ENCODE measurements at regions of chr2 and their contacts with region 1.

Region 1: DNA sequence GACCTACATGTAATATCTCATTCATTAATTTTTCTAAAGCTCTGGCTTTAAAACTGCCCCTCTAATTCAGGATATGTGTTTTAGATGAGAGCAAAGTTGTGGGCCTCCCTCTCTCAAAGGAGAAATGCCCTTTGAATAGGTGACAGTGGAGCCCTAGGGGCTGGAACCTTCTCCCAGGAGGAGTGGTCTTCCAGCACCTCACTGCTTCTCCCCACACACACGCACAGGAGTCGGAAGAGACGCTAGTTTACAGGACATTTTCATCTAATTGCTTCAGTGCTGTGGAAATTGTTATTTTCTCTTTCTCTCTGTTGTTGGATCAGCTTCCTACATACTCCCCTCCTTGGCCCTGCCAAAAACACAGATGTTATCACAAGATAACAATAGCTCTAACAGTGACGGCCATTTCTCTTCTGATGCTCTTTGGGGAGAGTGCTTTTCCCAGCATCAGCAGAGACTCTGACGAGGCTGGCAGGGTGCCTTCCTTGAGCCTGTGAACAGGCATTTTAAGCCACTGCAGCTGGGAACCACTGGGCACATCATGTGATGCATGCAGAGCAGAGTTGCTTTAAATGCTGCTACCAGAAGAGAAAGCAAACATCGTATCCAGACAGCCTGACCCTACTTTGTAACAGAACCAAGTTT is 209.4 kb upstream of the SP5 start:
- DNase-seq: peak; percentile 87 to 88
- ATAC-seq: peak; percentile 78
- H3K4me3 ChIP-seq: no peak overlapping the region
- H3K27ac ChIP-seq: peak overlapping the region in 1 of 2 donors; percentile 93
- H3K4me1 ChIP-seq: no peaks in the 10 kb centered on the region
- H3K27me3 ChIP-seq: no peaks in the 10 kb centered on the region

Region 2: GRCh38 chr2:169891593-169892298 is 614.0 kb before region 1 on chr2:
- intact Hi-C with region 1: no loop called
- DNase-seq: no peak
- ATAC-seq: no peak
- H3K4me3 ChIP-seq: no peak overlapping the region
- H3K27ac ChIP-seq: no peak overlapping the region
- H3K4me1 ChIP-seq: peaks cover 2 to 4% of the 10 kb centered on the region in 2 donors
- H3K27me3 ChIP-seq: no peaks in the 10 kb centered on the region

Region 3: DNA sequence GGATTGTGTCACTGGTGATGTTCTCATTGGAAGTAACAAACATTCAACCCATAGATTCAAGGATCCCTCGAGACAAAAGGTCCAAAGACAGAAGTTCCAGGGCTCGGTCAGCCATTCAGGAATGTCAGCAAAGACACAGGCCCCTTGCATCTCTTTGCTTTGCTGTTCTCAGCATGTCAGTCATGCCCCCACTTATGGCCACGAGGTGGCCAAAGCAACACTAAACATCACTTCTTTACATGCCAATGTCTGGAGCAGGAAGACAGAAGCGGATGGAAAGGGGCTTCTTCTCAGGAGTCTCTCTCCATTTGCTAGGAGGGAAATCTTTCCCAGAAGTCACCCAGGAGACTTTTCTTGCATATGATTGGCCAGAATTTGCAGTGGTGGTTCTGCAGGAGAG is 17.8 kb after region 1 on chr2:
- intact Hi-C with region 1: loop called in 1 of 2 experiments (anchors 1 kb)
- DNase-seq: no peak
- ATAC-seq: no peak
- H3K4me3 ChIP-seq: no peak overlapping the region
- H3K27ac ChIP-seq: no peak overlapping the region
- H3K4me1 ChIP-seq: peaks cover 3 to 12% of the 10 kb centered on the region in 2 donors
- H3K27me3 ChIP-seq: peaks cover 0 to 4% of the 10 kb centered on the region in 2 donors

Region 4: DNA sequence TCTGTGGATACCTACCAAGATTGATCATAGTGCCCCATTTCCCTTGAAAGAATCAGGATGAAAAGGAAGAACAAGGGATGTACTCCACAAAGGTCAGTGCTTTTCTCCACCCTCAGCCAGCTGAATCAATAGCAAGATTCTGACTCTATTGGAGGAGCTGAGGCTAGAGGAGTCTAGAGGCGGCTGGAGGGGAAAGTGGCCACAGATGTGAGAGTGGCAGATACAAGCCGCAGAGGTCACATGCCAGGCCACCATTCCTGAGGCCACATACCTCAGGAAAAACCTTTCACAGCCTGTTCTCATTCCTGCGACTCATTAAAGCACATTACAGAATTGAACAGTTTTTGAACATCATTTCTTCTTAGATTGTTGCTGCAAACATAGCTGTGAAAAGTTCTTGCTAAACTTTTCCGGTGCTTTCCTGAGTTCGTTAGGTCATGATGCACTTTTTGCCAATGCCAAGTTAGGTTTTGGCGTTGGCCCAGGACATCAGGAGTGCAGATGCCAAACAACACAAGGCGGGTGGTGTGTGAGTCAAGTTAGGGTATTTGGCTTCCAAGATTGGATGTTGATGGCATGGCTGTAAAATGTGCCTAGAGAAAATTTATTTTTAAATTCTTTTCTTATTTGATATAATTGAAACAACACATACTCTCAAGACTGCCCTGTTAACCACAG is 48.7 kb after region 1 on chr2:
- intact Hi-C with region 1: loop called in 1 of 2 experiments (anchors 10 kb)
- DNase-seq: peak; percentile 84 to 90
- ATAC-seq: peak; percentile 81
- H3K4me3 ChIP-seq: no peak overlapping the region
- H3K27ac ChIP-seq: peak overlapping the region; percentile 64 to 97
- H3K4me1 ChIP-seq: peaks cover 0 to 6% of the 10 kb centered on the region in 2 donors
- H3K27me3 ChIP-seq: no peaks in the 10 kb centered on the region

Measured in aorta (tissue), 5 donors.